ENCODE measurements at regions of chr9 and their contacts with region 1.

Region 1: GRCh38 chr9:2241836-2242741 is 226.9 kb downstream of the SMARCA2 start:
- DNase-seq: peak; percentile 56
- H3K4me3 Mint-ChIP-seq: peak overlapping the region; percentile 77
- H3K27ac Mint-ChIP-seq: peak overlapping the region; percentile 40
- H3K4me1 Mint-ChIP-seq: peaks cover 17% of the 10 kb centered on the region
- H3K27me3 Mint-ChIP-seq: peaks cover 37% of the 10 kb centered on the region

Region 2: DNA sequence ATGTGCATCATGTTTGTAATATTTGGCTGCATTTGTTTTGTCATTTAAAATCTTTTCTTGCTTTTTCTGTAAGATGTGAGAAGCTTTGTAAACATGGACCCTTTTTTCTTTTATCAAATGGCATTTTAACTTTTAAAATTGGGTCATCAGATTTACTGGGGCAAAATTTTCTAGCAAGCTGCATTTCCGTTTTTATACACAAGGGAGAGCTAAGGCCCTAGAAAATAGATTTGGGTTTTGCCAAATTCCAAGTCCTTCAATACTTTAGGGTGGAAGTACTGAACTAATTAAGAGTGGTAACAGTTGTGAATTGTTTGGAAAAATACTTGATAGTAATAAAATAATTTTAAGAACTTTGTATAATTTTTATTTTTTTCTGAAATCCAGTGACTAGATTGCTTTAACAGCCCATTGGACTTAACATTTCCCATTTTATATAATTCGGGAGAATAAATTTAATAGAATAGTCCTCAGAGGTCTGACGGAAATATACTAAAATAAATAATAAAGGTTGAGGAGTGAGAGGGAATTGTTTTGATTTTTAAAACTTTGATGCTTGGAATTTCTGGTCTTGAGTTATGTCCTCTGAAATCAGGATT is 109.5 kb before region 1 on chr9:
- intact Hi-C with region 1: no loop called
- DNase-seq: no peak
- H3K4me3 Mint-ChIP-seq: no peak overlapping the region
- H3K27ac Mint-ChIP-seq: no peak overlapping the region
- H3K4me1 Mint-ChIP-seq: peaks cover 4% of the 10 kb centered on the region
- H3K27me3 Mint-ChIP-seq: no peaks in the 10 kb centered on the region

Region 3: DNA sequence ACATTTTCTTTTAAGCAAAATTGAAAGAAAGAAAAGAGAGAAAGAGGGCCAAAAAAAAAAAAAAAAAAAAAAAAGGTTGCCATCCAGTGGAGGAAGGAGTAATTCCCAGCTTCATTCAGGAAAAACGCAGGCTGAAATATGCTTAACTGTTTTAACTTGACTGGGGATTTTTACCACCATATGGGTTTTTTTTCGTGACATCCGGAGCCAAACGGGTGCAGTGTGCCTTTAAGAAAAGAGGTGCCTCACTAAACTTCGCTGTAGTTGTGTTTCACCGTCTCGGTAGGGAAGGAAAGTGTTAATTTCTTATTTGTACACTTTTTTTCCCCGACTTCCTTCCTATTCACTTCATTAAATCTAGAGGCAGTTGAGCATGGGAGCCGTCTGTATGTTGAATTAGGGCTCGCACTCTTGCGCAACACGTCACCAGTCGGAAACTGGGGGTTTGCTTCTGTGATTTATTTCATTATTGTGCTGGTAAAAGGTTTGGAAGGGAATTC is 83.9 kb before region 1 on chr9:
- intact Hi-C with region 1: loop called (anchors 1 kb)
- DNase-seq: peak; percentile 19
- H3K4me3 Mint-ChIP-seq: peak overlapping the region; percentile 93
- H3K27ac Mint-ChIP-seq: peak overlapping the region; percentile 96
- H3K4me1 Mint-ChIP-seq: peaks cover 35% of the 10 kb centered on the region
- H3K27me3 Mint-ChIP-seq: no peaks in the 10 kb centered on the region

Region 4: GRCh38 chr9:2193552-2193951 is 48.5 kb before region 1 on chr9:
- intact Hi-C with region 1: loop called (anchors 2 kb)
- DNase-seq: no peak
- H3K4me3 Mint-ChIP-seq: no peak overlapping the region
- H3K27ac Mint-ChIP-seq: peak overlapping the region; percentile 1
- H3K4me1 Mint-ChIP-seq: peaks cover 15% of the 10 kb centered on the region
- H3K27me3 Mint-ChIP-seq: no peaks in the 10 kb centered on the region

Region 5: DNA sequence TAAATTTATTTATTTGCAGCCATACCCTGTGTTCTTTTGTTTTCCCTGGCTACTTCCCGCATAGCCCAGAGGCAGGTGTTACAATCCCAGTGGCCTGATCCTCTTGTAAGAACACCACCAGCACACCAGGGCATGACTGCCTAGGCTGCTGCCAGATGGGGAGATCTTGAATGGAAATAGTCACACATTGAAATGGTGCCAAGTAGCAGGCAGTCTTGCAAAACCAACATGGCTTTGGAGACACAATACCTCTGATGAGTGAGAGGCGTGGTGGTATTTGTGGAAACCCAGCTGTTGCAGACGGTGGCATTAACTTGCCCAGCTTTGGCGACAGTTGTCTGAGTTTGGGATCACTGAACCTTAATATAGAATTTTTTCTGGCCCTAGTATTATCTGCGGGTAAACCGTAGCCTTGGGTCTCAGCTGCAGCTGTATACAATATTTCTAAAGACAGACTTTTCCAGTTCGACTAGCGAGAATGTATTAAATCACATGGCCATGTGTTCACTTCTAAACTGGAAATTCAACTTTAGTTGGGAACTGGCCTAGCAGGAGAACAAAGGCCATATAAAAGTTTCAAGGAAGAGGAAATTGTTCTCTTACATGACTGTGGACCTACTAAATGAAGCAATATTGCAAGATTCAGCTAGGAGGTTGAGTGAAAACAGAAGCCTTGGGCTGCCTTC is 50.0 kb after region 1 on chr9:
- intact Hi-C with region 1: no loop called
- DNase-seq: no peak
- H3K4me3 Mint-ChIP-seq: no peak overlapping the region
- H3K27ac Mint-ChIP-seq: no peak overlapping the region
- H3K4me1 Mint-ChIP-seq: no peaks in the 10 kb centered on the region
- H3K27me3 Mint-ChIP-seq: peaks cover 6% of the 10 kb centered on the region

Region 6: DNA sequence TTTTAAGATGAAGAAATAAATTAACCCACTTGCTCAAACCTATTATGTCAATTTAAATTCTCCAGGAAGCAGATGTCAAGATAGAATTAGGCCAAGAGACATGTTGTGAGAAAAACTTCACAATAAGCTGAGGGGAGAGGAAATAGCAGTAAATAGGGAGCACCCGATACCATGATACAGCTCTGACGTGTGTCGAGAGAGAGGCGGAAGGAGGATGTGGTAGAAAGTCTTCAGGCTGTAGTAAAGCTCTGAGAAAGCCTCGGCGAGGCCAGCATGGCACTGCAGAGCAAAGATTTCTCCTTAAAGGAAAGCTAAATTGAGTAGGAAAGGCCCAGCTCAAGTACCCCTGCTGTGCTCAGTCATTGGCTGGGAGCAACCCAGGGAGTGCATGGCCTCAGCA is 607.9 kb after region 1 on chr9:
- intact Hi-C with region 1: loop called (anchors 10 kb)
- DNase-seq: no peak
- H3K4me3 Mint-ChIP-seq: no peak overlapping the region
- H3K27ac Mint-ChIP-seq: no peak overlapping the region
- H3K4me1 Mint-ChIP-seq: peaks cover 7% of the 10 kb centered on the region
- H3K27me3 Mint-ChIP-seq: peaks cover under 1% of the 10 kb centered on the region